ENCODE measurements at regions of chr6 and their contacts with region 1.

Region 1: DNA sequence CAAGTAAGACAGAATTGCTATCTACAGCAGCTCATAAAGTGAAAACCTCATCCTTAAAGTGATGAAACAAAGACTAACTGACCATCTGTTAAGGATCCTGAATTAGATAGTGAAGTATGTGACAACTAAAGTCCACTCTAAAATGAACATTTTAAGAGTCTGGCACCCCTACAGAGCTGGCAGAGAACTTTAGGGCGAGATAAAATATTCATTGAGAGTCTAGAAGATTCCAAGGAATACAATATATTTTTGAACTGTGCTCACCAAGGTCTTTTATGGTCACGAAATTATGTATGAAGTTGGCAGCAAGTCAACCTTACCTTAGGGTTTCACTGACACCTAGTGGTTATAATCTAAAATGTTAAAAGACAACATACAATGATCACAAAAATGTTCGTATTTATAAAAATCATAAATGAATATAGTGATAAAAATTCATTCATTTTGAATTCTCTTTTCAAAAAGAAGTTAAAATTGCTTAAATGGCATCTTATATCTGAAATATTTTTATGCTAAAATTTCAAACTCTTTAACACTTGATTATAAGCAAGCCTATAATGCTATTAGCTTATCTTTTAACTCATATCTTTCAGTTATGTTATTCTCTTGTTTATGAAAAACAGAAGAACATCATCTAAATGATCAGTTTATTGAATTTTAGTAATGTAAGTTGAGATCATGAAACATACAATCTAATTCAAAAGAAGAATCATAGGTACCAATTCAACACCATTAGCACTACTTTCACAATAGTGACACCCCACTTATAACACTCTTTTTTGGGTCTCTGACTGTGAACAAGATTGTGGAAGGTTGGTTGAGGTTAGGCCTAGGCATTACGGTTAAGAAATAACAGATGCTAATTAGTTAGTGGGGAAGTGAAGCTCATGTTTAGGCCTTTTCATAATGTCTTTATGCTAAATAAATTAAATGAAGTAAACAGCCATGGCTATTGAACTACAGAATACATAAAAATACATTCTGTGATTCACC is 27.5 kb downstream of the RSPH3 start:
- DNase-seq: no peak
- H3K4me3 ChIP-seq: no peak overlapping the region
- H3K27ac ChIP-seq: no peak overlapping the region
- H3K4me1 ChIP-seq: peaks cover 0 to 5% (median 2%) of the 10 kb centered on the region in 4 donors
- H3K27me3 ChIP-seq: no peaks in the 10 kb centered on the region
- CTCF ChIP-seq: peak; percentile 57 to 81 (median 59)
- EP300 ChIP-seq: no peak
- POLR2A ChIP-seq: no peak

Region 2: DNA sequence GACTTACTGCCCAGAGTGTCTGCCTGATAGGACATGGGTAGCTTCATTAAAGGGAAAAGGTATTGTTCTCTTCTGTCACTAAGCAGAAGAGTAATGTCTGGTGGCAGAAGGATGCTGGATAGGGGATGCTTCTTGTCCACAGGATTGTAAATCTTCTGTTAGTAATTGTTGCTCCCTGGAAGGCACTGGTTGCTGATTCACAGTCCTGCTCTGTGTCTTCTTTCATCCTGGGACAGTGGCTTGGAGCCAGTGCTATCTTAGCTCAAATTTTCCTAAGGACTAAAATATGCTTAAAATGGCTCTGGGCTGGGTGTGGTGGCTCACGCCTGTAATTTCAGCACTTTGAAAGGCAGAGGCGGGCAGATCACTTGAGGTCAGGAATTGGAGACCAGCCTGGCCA is 274.7 kb before region 1 on chr6:
- in situ Hi-C with region 1: loop called in 3 of 4 experiments (anchors 5 to 10 kb)
- intact Hi-C with region 1: loop called (anchors 5 kb)
- DNase-seq: no peak
- H3K4me3 ChIP-seq: no peak overlapping the region
- H3K27ac ChIP-seq: no peak overlapping the region
- H3K4me1 ChIP-seq: no peaks in the 10 kb centered on the region
- H3K27me3 ChIP-seq: no peaks in the 10 kb centered on the region
- CTCF ChIP-seq: no peak
- EP300 ChIP-seq: no peak
- POLR2A ChIP-seq: no peak

Region 3: DNA sequence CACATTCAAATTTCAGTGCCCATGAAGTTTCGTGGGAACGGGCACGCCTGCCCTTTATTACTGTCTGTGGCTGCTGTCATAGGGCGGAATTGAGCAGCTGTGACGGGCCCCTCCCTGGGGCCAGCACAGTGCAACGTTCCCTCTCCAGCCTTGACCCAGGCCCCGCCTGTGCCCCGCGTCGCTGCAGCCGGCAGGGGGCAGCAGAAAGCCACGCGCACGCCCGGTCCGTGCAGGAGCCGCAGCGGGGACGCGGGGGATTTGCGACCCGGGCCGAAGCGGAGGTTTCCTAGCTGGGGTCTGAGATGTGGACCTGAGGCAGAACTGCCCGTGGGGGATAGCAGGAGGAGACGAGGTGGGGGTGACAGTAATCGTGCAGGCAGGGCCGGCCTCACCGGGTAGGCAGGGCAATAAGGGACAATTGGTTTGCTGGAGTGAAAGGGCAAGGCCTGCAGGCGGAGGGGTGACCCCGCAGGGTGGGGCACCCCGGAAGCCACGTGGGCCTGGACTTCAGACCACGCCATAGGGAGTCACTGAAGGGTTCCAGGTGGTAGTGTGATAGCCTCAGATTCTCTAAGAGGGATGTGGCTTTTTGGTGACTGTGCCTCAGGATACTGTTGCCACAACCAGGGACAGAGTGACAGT is 268.2 kb before region 1 on chr6:
- in situ Hi-C with region 1: loop called (anchors 5 to 10 kb)
- intact Hi-C with region 1: loop called (anchors 5 kb)
- DNase-seq: peak; percentile 93
- H3K4me3 ChIP-seq: peak overlapping the region in 3 of 4 donors; percentile 31 to 56 (median 33)
- H3K27ac ChIP-seq: peak overlapping the region; percentile 74 to 80 (median 76)
- H3K4me1 ChIP-seq: peaks cover 8 to 51% (median 35%) of the 10 kb centered on the region in 4 donors
- H3K27me3 ChIP-seq: no peaks in the 10 kb centered on the region
- CTCF ChIP-seq: peak; percentile 99 to 100 (median 99)
- EP300 ChIP-seq: peak; percentile 49
- POLR2A ChIP-seq: peak; percentile 26

Region 4: DNA sequence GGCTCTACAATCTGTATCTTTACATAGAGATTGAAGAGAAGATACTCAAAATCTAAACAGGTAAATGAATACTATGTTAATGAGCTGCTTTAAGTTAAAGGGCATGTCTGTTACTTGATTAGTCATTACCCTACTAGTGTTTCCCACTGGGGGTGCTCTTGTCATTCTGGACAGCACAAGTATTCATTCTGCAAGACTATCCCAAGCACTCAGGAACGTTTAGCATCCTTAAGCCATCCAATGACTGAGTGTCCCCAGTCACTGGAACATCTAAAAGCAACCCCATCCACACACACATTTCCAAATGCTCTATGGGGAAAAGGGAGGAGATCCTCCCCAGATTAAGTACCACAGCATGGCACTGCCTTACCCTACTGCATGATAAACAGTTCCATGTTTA is 179.1 kb before region 1 on chr6:
- in situ Hi-C with region 1: loop called in 1 of 4 experiments (anchors 10 kb)
- intact Hi-C with region 1: no loop called
- DNase-seq: peak; percentile 6
- H3K4me3 ChIP-seq: no peak overlapping the region
- H3K27ac ChIP-seq: peak overlapping the region in 1 of 4 donors; percentile 8
- H3K4me1 ChIP-seq: peaks cover 23 to 69% (median 30%) of the 10 kb centered on the region in 4 donors
- H3K27me3 ChIP-seq: no peaks in the 10 kb centered on the region
- CTCF ChIP-seq: peak in 1 of 5 experiments; percentile 42
- EP300 ChIP-seq: no peak
- POLR2A ChIP-seq: no peak